ENCODE measurements at regions of chr11 and their contacts with region 1.

Region 1: DNA sequence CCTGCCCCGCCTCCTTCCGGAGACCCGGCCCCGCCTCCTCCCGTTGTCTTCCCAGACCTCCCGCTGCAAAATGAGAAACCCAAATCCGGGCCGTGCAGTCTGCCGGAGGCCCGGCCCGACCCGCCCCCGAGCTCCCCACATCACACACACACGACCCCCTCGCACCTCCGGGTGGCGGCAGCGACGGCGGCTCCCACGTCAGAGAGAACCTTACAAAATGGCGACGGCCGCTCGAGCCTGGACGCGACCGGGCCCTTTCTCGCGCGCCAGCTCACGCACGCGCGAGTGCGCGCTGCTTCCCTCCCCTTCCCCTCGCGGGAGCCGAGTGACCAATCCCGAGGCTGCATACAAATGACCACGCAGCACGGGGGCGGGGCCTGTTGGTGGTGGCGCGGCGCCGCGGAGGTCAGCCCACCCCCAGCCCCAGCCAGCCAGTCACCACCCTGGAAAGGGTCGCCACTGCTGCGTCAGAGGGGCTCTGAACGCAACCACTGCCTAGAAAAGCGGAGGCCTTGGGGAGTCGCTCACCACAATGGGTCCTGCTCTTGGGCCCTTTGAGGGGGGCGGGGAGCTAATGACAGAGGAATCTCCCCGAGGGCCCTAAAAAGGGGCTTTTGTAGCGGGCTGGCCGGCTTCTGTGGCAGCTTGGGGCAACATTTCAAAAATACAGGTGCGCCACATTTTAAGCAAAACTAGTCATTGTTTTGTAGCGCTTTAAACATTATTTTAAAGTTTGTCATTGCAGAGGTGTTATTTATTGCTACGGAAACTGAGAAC is at the start of gene RBM4B:
- DNase-seq: peak; percentile 96 to 98
- ATAC-seq: peak; percentile 95
- total RNA-seq, gene RBM4B: 14.7 to 17.6 TPM

Region 2: GRCh38 chr11:66408488-66409214 is 269.1 kb before region 1 on chr11:
- intact Hi-C with region 1: loop called in 1 of 2 experiments (anchors 10 kb)
- DNase-seq: peak; percentile 82 to 94
- ATAC-seq: peak; percentile 90

Region 3: GRCh38 chr11:66580803-66581202 is 97.0 kb before region 1 on chr11:
- intact Hi-C with region 1: loop called in 1 of 2 experiments (anchors 5 kb)
- DNase-seq: no peak
- ATAC-seq: no peak